T-cell (primary cell): ENCODE measurements at regions of chr17 and their contacts with region 1.

Region 1: GRCh38 chr17:40559954-40560591 is 5.2 kb downstream of the CCR7 start:
- DNase-seq: peak; percentile 54 to 90 (median 77)
- ATAC-seq: peak; percentile 32 to 56 (median 44)
- H3K4me3 ChIP-seq: peak overlapping the region; percentile 75 to 97
- H3K4me3 Mint-ChIP-seq: peak overlapping the region; percentile 91 to 99 (median 93)
- H3K27ac ChIP-seq: peak overlapping the region; percentile 89
- H3K27ac Mint-ChIP-seq: peak overlapping the region; percentile 95 to 100
- H3K4me1 ChIP-seq: peaks cover 37 to 97% of the 10 kb centered on the region in 2 experiments
- H3K4me1 Mint-ChIP-seq: peaks cover 74 to 94% (median 88%) of the 10 kb centered on the region in 3 donors
- H3K27me3 ChIP-seq: no peaks in the 10 kb centered on the region
- H3K27me3 Mint-ChIP-seq: no peaks in the 10 kb centered on the region

Region 2: GRCh38 chr17:40382251-40382650 is 177.8 kb before region 1 on chr17:
- CTCF ChIA-PET with region 1: no interaction called
- POLR2A ChIA-PET with region 1: interaction called in 1 of 2 experiments, 11 read pairs
- DNase-seq: no peak
- ATAC-seq: no peak
- H3K4me3 ChIP-seq: no peak overlapping the region
- H3K4me3 Mint-ChIP-seq: no peak overlapping the region
- H3K27ac ChIP-seq: no peak overlapping the region
- H3K27ac Mint-ChIP-seq: no peak overlapping the region
- H3K4me1 ChIP-seq: no peaks in the 10 kb centered on the region
- H3K4me1 Mint-ChIP-seq: no peaks in the 10 kb centered on the region
- H3K27me3 ChIP-seq: no peaks in the 10 kb centered on the region
- H3K27me3 Mint-ChIP-seq: no peaks in the 10 kb centered on the region

Region 3: DNA sequence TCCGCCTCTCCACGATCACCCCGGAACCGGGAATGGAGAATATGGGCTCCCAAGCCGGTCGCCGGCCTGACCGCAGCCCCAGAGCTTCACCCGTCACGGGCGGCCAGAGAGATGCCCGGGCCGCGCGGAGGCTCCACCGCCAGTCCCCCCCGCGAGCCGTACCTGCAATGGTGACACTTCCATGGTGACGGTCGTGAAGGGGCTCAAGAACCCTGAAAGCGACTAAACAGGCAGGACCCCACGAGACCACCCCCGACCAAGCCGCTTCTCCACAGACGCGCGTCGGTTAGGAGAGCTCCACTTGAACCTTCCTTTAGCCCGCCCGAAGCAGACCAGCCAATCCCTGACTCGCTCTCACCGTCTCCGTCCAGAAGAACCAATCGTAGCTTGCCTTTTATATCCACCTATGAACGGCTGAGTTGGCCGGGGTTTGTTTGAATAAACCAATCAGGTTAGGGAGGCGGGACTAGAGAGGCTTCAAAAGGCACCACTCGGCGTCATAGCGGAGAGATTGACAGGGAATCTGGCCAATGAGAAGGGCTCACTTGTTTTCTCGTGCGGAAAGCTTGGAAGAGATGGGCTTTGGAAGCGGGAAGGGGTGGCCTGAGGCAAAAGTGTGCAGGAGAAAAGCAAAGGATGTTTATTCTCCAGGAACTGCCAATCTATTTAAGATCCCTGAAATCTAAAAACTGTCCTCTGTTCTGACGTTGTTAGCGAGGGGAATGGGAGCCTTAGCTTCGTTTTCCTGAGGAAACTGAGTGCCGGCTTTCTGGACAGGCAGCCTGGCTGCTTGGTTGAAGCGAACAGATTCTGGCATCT is 142.3 kb before region 1 on chr17 and contains the start of gene TOP2A:
- CTCF ChIA-PET with region 1: interaction called, 3 to 12 read pairs
- POLR2A ChIA-PET with region 1: interaction called in 1 of 2 experiments, 3 read pairs
- DNase-seq: peak; percentile 81 to 100 (median 95)
- ATAC-seq: peak; percentile 98 to 100 (median 99)
- H3K4me3 ChIP-seq: peak within 1 kb of the TSS; percentile 61 to 74
- H3K4me3 Mint-ChIP-seq: peak within 1 kb of the TSS; percentile 82 to 92 (median 90)
- H3K27ac ChIP-seq: peak within 1 kb of the TSS; percentile 43
- H3K27ac Mint-ChIP-seq: peak within 1 kb of the TSS; percentile 88 to 91
- H3K4me1 ChIP-seq: peaks cover 7 to 28% of the 10 kb centered on the region in 2 experiments
- H3K4me1 Mint-ChIP-seq: peaks cover 27 to 30% (median 28%) of the 10 kb centered on the region in 3 donors
- H3K27me3 ChIP-seq: peaks cover 0 to 8% of the 10 kb centered on the region in 2 experiments
- H3K27me3 Mint-ChIP-seq: no peaks in the 10 kb centered on the region
- total RNA-seq, gene TOP2A: 2.3 to 4.2 (median 2.7) TPM

Region 4: DNA sequence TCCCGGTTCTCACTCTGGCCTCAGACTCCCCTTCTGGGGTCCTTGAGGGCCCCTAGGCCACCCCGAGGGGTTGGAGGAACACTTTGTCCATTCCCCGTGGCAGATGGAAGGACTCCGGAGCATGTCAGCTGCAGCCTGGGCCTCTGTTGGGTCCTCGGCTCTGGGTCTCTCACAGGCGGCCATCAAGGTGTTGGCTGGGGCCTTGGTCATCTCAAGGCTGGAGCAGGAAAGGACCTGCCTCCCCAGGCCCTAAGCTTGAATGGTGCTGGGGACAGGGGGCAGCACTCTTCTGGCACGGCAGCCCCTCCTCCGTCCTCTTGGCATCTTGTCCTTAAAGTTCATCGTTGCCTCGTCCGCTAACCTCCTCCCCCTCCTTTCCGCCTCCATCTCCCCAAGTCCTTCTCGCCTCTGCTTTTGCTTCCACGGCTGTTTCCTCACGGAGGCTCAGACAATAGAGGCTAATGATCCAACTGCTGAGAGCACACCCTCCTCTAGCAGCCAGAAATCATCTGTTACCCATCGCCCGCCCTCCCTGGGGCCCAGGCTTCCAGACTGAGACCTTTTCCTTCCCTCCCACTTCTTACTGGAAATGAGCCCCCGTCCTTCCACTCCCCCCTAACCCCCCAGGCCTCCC is 18.0 kb before region 1 on chr17:
- CTCF ChIA-PET with region 1: interaction called, 5 to 27 read pairs
- POLR2A ChIA-PET with region 1: interaction called, 6 to 8 read pairs
- DNase-seq: peak in 1 of 35 experiments; percentile 43
- ATAC-seq: no peak
- H3K4me3 ChIP-seq: peak overlapping the region in 1 of 2 donors; percentile 13
- H3K4me3 Mint-ChIP-seq: peak overlapping the region; percentile 37 to 83 (median 70)
- H3K27ac ChIP-seq: peak overlapping the region; percentile 79
- H3K27ac Mint-ChIP-seq: peak overlapping the region; percentile 91 to 94
- H3K4me1 ChIP-seq: peaks cover 57 to 91% of the 10 kb centered on the region in 2 experiments
- H3K4me1 Mint-ChIP-seq: peaks cover 82 to 91% (median 89%) of the 10 kb centered on the region in 3 donors
- H3K27me3 ChIP-seq: peaks cover 0 to 2% of the 10 kb centered on the region in 2 experiments
- H3K27me3 Mint-ChIP-seq: no peaks in the 10 kb centered on the region

Region 5: DNA sequence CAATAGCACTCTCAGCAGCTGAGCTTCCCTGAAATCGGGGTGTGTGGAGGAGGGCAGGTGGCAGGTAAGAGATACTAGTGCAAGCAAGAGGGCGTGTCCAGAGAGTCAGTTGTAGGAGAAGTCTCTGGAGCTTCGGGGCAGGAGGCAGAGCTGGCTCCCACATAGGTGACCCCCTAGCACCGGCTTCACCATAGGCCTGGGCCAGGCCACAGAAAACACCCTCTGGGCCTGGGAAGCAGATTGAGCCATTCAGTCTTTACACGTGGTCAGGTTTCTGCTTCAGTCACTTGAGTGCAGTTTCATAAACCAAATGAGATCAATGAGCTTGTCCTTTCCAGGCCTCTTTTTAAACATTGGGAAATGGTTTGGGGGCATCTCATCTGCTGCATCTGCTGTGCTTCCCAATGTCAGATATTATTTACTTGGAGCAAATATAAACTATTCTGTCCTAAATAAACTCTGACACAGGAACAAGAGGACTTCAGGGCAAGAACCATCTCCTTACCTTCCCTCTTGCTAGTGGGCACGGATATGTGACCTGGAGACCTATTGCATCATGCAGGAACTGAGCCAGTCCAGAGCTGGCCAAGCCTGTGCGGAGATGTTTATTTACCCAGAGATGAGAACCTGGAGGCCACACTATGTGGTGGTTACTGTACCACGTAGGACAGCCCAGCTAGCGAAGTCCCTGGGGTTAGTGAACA is 10.9 kb before region 1 on chr17:
- CTCF ChIA-PET with region 1: interaction called, 6 to 27 read pairs
- POLR2A ChIA-PET with region 1: interaction called, 5 to 8 read pairs
- DNase-seq: peak in 1 of 35 experiments; percentile 6
- ATAC-seq: no peak
- H3K4me3 ChIP-seq: no peak overlapping the region
- H3K4me3 Mint-ChIP-seq: peak overlapping the region in 1 of 3 donors; percentile 49
- H3K27ac ChIP-seq: peak overlapping the region; percentile 24
- H3K27ac Mint-ChIP-seq: peak overlapping the region; percentile 86 to 91
- H3K4me1 ChIP-seq: peaks cover 33 to 86% of the 10 kb centered on the region in 2 experiments
- H3K4me1 Mint-ChIP-seq: peaks cover 90 to 92% (median 90%) of the 10 kb centered on the region in 3 donors
- H3K27me3 ChIP-seq: no peaks in the 10 kb centered on the region
- H3K27me3 Mint-ChIP-seq: no peaks in the 10 kb centered on the region

Region 6: GRCh38 chr17:40615295-40615988 is 55.4 kb after region 1 on chr17:
- CTCF ChIA-PET with region 1: interaction called, 8 to 25 read pairs
- POLR2A ChIA-PET with region 1: interaction called, 12 to 32 read pairs
- DNase-seq: peak in 25 of 35 experiments; percentile 32 to 82 (median 58)
- ATAC-seq: peak; percentile 44 to 69 (median 46)
- H3K4me3 ChIP-seq: no peak overlapping the region
- H3K4me3 Mint-ChIP-seq: peak overlapping the region; percentile 61 to 94 (median 64)
- H3K27ac ChIP-seq: peak overlapping the region; percentile 99
- H3K27ac Mint-ChIP-seq: peak overlapping the region; percentile 87 to 100
- H3K4me1 ChIP-seq: peaks cover 40 to 76% of the 10 kb centered on the region in 2 experiments
- H3K4me1 Mint-ChIP-seq: peaks cover 71 to 86% (median 72%) of the 10 kb centered on the region in 3 donors
- H3K27me3 ChIP-seq: no peaks in the 10 kb centered on the region
- H3K27me3 Mint-ChIP-seq: no peaks in the 10 kb centered on the region